Caco-2 (cell line): ENCODE measurements at regions of chr18 and their contacts with region 1.

Region 1: GRCh38 chr18:31685097-31686082 is 1.0 kb upstream of the B4GALT6 start:
- DNase-seq: peak; percentile 79 to 83
- H3K4me3 ChIP-seq: peak overlapping the region; percentile 67
- H3K4me3 Mint-ChIP-seq: peak overlapping the region; percentile 94
- H3K27ac Mint-ChIP-seq: peak overlapping the region; percentile 45
- H3K4me1 ChIP-seq: peaks cover 25% of the 10 kb centered on the region
- H3K4me1 Mint-ChIP-seq: peaks cover 13% of the 10 kb centered on the region
- H3K27me3 ChIP-seq: no peaks in the 10 kb centered on the region
- H3K27me3 Mint-ChIP-seq: no peaks in the 10 kb centered on the region
- CTCF ChIP-seq: peak in 1 of 2 experiments; percentile 32

Region 2: GRCh38 chr18:31587529-31587928 is 97.9 kb before region 1 on chr18:
- CTCF ChIA-PET with region 1: no interaction called
- POLR2A ChIA-PET with region 1: no interaction called
- intact Hi-C with region 1: loop called (anchors 1 kb)
- DNase-seq: peak; percentile 66 to 73
- H3K4me3 ChIP-seq: no peak overlapping the region
- H3K4me3 Mint-ChIP-seq: peak overlapping the region; percentile 49
- H3K27ac Mint-ChIP-seq: peak overlapping the region; percentile 79
- H3K4me1 ChIP-seq: peaks cover 51% of the 10 kb centered on the region
- H3K4me1 Mint-ChIP-seq: peaks cover 27% of the 10 kb centered on the region
- H3K27me3 ChIP-seq: no peaks in the 10 kb centered on the region
- H3K27me3 Mint-ChIP-seq: no peaks in the 10 kb centered on the region
- CTCF ChIP-seq: no peak

Region 3: DNA sequence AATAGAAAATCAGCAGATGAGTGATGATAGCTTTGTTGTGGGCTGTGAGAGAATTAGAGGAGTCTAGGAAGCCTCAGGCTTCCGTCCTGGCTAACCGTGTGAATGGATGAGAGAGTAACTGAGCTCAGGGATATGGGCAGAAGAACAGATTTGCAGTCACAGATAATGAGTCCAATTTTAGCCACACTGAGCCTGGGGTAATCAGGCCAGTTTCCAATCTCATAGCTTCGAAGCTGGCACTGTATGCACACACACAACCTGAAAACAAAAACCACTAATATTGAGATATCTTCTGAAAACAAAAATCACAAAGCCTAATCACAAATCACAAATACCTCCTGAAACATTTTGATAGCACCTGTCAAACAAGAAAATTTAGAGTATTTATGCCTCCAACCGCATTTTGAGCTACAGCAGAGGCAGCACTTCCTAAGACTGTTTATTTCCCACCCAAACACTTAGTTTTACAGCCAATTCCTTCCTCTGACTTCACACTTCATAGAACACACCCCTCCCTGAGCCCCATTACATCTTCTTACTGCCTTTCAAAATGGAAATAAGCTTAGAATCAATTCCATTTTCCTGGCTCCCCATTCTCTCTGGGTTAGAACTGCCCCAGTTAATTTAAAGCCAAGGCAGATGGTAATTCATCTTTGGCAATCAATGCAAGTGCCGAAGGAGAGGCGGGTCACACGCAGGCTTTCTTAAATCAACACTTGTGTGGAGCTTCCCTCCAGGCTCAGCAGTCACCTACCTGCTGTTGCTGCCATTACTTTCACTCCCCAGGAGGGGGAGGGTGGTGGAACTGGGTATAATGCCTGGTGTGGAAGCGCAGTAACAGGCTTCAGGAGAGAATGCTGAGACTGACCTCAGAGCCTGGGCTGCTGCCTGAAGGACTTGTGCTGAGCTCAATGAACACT is 74.8 kb before region 1 on chr18:
- CTCF ChIA-PET with region 1: interaction called, 3 read pairs
- POLR2A ChIA-PET with region 1: no interaction called
- intact Hi-C with region 1: loop called (anchors 5 kb)
- DNase-seq: peak; percentile 58 to 61
- H3K4me3 ChIP-seq: no peak overlapping the region
- H3K4me3 Mint-ChIP-seq: peak overlapping the region; percentile 4
- H3K27ac Mint-ChIP-seq: no peak overlapping the region
- H3K4me1 ChIP-seq: no peaks in the 10 kb centered on the region; the same call in 1 of the 2 replicates
- H3K4me1 Mint-ChIP-seq: peaks cover 24% of the 10 kb centered on the region
- H3K27me3 ChIP-seq: no peaks in the 10 kb centered on the region
- H3K27me3 Mint-ChIP-seq: no peaks in the 10 kb centered on the region
- CTCF ChIP-seq: peak in 1 of 2 experiments; percentile 40

Region 4: GRCh38 chr18:31648966-31649429 is 36.4 kb before region 1 on chr18:
- CTCF ChIA-PET with region 1: no interaction called
- POLR2A ChIA-PET with region 1: no interaction called
- intact Hi-C with region 1: loop called (anchors 2 kb)
- DNase-seq: peak; percentile 61 to 70
- H3K4me3 ChIP-seq: no peak overlapping the region
- H3K4me3 Mint-ChIP-seq: peak overlapping the region; percentile 37
- H3K27ac Mint-ChIP-seq: peak overlapping the region; percentile 72
- H3K4me1 ChIP-seq: peaks cover 59% of the 10 kb centered on the region
- H3K4me1 Mint-ChIP-seq: peaks cover 48% of the 10 kb centered on the region
- H3K27me3 ChIP-seq: no peaks in the 10 kb centered on the region
- H3K27me3 Mint-ChIP-seq: no peaks in the 10 kb centered on the region
- CTCF ChIP-seq: no peak

Region 5: GRCh38 chr18:31722369-31722957 is 37.1 kb after region 1 on chr18:
- CTCF ChIA-PET with region 1: no interaction called
- POLR2A ChIA-PET with region 1: no interaction called
- intact Hi-C with region 1: loop called (anchors 2 kb)
- DNase-seq: peak; percentile 54 to 65
- H3K4me3 ChIP-seq: no peak overlapping the region
- H3K4me3 Mint-ChIP-seq: no peak overlapping the region
- H3K27ac Mint-ChIP-seq: no peak overlapping the region
- H3K4me1 ChIP-seq: no peaks in the 10 kb centered on the region
- H3K4me1 Mint-ChIP-seq: no peaks in the 10 kb centered on the region
- H3K27me3 ChIP-seq: no peaks in the 10 kb centered on the region
- H3K27me3 Mint-ChIP-seq: no peaks in the 10 kb centered on the region
- CTCF ChIP-seq: peak; percentile 45 to 49

Region 6: DNA sequence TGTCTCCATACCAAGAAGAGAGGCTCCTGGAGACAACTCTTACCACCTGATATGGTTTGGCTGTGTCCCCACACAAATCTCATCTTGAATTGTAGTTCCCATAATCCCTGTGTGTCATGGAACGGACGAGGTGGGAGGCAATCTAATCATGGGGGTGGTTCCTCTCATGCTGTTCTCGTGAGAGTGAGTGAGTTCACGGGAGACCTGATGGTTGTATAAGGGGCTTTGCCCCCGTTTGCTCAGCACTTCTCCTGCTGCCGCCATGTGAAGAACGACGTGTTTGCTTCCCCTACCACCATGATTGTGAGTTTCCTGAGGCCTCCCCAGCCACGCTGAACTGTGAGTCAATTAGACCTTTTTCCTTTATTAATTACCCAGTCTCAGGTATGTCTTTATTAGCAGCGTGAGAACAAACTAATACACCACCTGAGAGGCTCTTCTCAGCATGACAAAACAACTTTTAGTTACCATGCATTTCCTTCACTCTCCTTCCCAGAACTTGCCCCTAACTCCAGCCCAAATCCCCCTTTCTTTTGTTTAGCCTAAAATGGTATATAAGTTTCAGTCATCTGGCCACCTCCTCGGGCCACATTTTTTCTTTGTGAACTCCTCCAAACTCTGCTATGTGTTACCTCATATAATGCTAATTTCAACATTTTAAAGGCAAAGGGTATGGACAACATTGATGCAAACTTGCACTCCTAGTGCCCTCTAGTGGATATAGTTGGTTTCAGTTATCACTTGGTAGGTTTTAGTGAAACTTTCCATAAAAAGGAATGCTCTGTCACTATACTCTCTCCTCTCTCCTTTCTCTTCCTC is 133.9 kb after region 1 on chr18:
- CTCF ChIA-PET with region 1: no interaction called
- POLR2A ChIA-PET with region 1: no interaction called
- intact Hi-C with region 1: loop called (anchors 2 kb)
- DNase-seq: peak in 1 of 2 experiments; percentile 56
- H3K4me3 ChIP-seq: no peak overlapping the region
- H3K4me3 Mint-ChIP-seq: peak overlapping the region; percentile 12
- H3K27ac Mint-ChIP-seq: peak overlapping the region; percentile 54
- H3K4me1 ChIP-seq: peaks cover 12% of the 10 kb centered on the region; the same call in 1 of the 2 replicates
- H3K4me1 Mint-ChIP-seq: peaks cover 7% of the 10 kb centered on the region
- H3K27me3 ChIP-seq: no peaks in the 10 kb centered on the region
- H3K27me3 Mint-ChIP-seq: no peaks in the 10 kb centered on the region
- CTCF ChIP-seq: peak; percentile 32 to 51